B cell (primary cell): ENCODE measurements at regions of chr17 and their contacts with region 1.

Region 1: DNA sequence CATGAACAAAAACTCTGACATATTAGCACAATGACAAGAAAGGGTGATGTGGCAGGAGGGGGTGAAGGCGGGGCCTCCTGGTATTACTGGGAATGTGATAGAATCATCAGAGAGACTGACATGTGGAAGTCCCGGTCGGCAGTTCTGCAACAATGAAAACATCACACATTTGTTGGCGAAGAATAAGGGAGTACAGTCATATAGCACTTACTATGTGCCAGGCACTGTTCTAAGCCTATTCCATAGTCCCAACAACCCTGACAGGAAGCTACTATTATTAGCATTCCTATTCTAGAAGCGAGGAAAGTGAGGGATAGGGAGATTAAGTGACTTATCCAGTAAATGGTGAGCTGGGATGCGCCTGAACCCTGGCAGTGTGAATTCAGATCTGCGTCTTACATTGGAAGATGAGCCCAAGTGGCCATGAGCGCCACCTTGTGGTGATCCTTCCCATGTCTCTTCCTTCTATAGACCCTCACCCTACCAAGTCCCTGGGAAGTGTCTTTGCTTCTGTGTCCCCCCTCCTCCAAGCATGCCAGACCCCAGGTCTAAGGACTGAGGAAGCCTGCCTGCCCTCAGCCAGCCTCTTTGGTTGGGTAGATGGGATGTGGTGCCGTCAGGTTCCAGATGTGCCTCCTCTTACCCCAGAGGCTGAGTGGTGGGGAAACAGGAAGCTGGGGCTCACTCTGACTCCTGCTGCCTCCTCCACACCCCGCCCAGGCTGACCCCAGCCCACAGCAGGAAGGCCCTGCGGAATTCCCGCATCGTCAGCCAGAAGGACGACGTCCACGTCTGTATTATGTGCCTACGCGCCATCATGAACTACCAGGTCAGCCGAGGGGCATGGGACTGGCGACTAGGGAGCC is 14.0 kb downstream of the FMNL1 start:
- DNase-seq: peak; percentile 87
- ATAC-seq: peak; percentile 56
- H3K4me3 ChIP-seq: no peak overlapping the region
- H3K4me3 Mint-ChIP-seq: no peak overlapping the region
- H3K27ac ChIP-seq: peak overlapping the region; percentile 0 to 43
- H3K27ac Mint-ChIP-seq: peak overlapping the region; percentile 82
- H3K4me1 ChIP-seq: peaks cover 18 to 45% of the 10 kb centered on the region in 2 donors
- H3K4me1 Mint-ChIP-seq: peaks cover 47% of the 10 kb centered on the region
- H3K27me3 ChIP-seq: no peaks in the 10 kb centered on the region
- H3K27me3 Mint-ChIP-seq: no peaks in the 10 kb centered on the region
- CTCF ChIP-seq: peak; percentile 83

Region 2: GRCh38 chr17:45261577-45262515 is 26.2 kb after region 1 on chr17 and contains the start of gene SPATA32:
- CTCF ChIA-PET with region 1: interaction called, 13 read pairs
- POLR2A ChIA-PET with region 1: no interaction called
- intact Hi-C with region 1: no loop called
- DNase-seq: peak; percentile 68
- ATAC-seq: peak; percentile 71
- H3K4me3 ChIP-seq: peak within 1 kb of the TSS; percentile 19 to 81 (median 73)
- H3K4me3 Mint-ChIP-seq: peak within 1 kb of the TSS; percentile 87
- H3K27ac ChIP-seq: peak within 1 kb of the TSS; percentile 51 to 62
- H3K27ac Mint-ChIP-seq: peak within 1 kb of the TSS; percentile 78
- H3K4me1 ChIP-seq: peaks cover 5 to 18% of the 10 kb centered on the region in 2 donors
- H3K4me1 Mint-ChIP-seq: peaks cover 16% of the 10 kb centered on the region
- H3K27me3 ChIP-seq: no peaks in the 10 kb centered on the region
- H3K27me3 Mint-ChIP-seq: no peaks in the 10 kb centered on the region
- CTCF ChIP-seq: no peak
- total RNA-seq, gene SPATA32: 0.27 and 0.52 TPM in 2 replicates